SK-N-SH (cell line): ENCODE measurements at regions of chr5 and their contacts with region 1.

Region 1: GRCh38 chr5:159106569-159107282 is 7.0 kb upstream of the EBF1 start:
- DNase-seq: peak; percentile 91
- H3K4me3 ChIP-seq: peak overlapping the region; percentile 28 to 63; a peak in 2 of 4 replicates
- H3K27ac ChIP-seq: no peak overlapping the region
- H3K4me1 ChIP-seq: no peaks in the 10 kb centered on the region; a peak in 1 of 4 replicates
- H3K27me3 ChIP-seq: peaks cover 10% of the 10 kb centered on the region; the same call in 1 of the 2 replicates
- CTCF ChIP-seq: peak; percentile 97
- EP300 ChIP-seq: no peak
- RAD21 ChIP-seq: peak; percentile 96

Region 2: DNA sequence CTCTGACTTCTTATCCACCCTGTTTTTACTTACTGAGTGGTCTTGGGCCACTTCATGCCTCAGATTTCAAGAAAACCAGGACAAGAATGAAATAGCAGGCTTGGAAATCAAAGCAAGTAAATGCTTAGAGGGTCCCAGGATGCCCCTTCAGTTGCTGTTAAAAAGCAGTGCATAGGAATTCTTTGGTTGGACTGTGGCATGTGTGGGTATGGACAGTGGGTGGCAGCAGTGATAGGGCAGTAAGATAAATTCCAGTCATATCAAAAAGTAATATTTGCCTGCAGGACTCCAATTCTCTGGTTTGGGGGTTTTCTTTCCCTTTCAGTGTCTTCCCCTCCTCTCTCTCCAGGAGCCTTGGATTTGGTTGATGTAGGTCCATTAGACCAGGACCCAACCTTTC is 941.1 kb before region 1 on chr5:
- CTCF ChIA-PET with region 1: interaction called, 18 read pairs
- POLR2A ChIA-PET with region 1: no interaction called
- DNase-seq: no peak
- H3K4me3 ChIP-seq: no peak overlapping the region
- H3K27ac ChIP-seq: no peak overlapping the region
- H3K4me1 ChIP-seq: peaks cover 0 to 17% of the 10 kb centered on the region in 2 experiments; a peak in 2 of 4 replicates
- H3K27me3 ChIP-seq: no peaks in the 10 kb centered on the region
- CTCF ChIP-seq: 0 out of 2 replicates have a peak, but pooled peaks have one; percentile 10
- EP300 ChIP-seq: no peak
- RAD21 ChIP-seq: peak; percentile 20; the same call in 1 of the 2 replicates

Region 3: DNA sequence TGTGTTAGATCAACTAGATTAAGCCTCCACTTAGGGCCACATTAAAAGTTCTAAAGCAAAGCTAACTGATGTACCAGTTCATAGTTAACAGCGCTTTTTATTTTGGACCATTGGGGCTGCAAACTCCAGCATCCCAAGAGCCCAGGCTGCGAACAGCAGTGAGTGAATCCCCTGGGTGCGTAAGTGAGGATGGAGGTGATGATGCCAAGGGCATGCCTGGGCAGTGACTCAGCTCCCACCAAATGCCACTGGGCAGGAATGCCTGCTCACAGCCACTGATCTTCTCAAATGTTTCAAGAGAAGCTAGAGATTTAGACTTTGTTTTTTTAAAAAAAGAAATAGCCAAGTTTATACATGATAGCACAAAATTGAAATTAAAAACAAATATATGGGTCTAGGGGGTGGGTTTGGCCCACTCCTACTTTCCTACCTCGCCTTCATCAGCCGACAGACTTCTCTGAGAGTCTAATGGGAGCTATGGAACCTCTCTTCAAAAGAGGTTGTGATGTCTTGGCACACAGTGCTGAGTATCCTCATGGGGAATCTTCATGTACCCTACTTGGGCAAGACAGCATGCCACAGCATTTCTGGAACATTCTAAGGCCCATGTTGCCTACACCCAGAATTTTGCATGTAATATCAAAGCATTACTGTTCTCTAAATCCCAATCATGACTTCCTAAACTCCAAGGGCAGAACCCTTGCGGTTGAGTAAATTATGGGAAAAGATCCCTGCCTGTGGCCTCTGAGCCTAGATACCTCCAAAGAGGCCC is 405.1 kb before region 1 on chr5:
- CTCF ChIA-PET with region 1: interaction called, 178 read pairs
- POLR2A ChIA-PET with region 1: no interaction called
- DNase-seq: no peak
- H3K4me3 ChIP-seq: peak overlapping the region in 1 of 2 experiments; percentile 25; a peak in 1 of 4 replicates
- H3K27ac ChIP-seq: peak overlapping the region; percentile 22 to 74; a peak in 3 of 4 replicates
- H3K4me1 ChIP-seq: peaks cover 3 to 13% of the 10 kb centered on the region in 2 experiments
- H3K27me3 ChIP-seq: no peaks in the 10 kb centered on the region
- CTCF ChIP-seq: no peak
- EP300 ChIP-seq: peak in 1 of 2 experiments; percentile 47; a peak in 1 of 4 replicates
- RAD21 ChIP-seq: no peak

Region 4: DNA sequence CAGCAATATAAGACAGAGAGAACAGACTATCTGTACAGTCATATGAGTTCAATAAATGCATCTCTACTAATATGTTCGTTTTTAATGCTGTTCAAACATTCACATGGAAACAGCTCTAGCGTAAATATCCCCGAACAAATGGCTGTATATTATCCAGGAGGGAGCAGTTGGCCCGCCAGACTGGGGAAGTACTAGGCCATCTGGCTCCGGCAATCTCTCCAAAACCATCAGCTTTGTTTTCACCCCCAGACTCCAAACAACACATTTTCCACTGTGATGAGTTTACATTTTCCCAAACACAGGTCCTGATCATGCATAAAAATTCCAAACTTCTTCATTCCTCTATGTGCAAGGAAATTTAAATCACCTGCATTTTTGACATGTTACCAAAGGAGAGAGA is 15.7 kb before region 1 on chr5:
- CTCF ChIA-PET with region 1: interaction called, 13 read pairs
- POLR2A ChIA-PET with region 1: no interaction called
- DNase-seq: no peak
- H3K4me3 ChIP-seq: no peak overlapping the region
- H3K27ac ChIP-seq: no peak overlapping the region
- H3K4me1 ChIP-seq: peaks cover 0 to 4% of the 10 kb centered on the region in 2 experiments; a peak in 2 of 4 replicates
- H3K27me3 ChIP-seq: no peaks in the 10 kb centered on the region
- CTCF ChIP-seq: no peak
- EP300 ChIP-seq: no peak
- RAD21 ChIP-seq: no peak

Region 5: GRCh38 chr5:159133041-159133741 is 26.5 kb after region 1 on chr5:
- CTCF ChIA-PET with region 1: interaction called, 16 read pairs
- POLR2A ChIA-PET with region 1: no interaction called
- DNase-seq: peak; percentile 32
- H3K4me3 ChIP-seq: no peak overlapping the region; a peak in 1 of 4 replicates
- H3K27ac ChIP-seq: no peak overlapping the region
- H3K4me1 ChIP-seq: no peaks in the 10 kb centered on the region; a peak in 2 of 4 replicates
- H3K27me3 ChIP-seq: no peaks in the 10 kb centered on the region; the same call in 1 of the 2 replicates
- CTCF ChIP-seq: peak; percentile 84
- EP300 ChIP-seq: no peak
- RAD21 ChIP-seq: peak; percentile 89

Region 6: DNA sequence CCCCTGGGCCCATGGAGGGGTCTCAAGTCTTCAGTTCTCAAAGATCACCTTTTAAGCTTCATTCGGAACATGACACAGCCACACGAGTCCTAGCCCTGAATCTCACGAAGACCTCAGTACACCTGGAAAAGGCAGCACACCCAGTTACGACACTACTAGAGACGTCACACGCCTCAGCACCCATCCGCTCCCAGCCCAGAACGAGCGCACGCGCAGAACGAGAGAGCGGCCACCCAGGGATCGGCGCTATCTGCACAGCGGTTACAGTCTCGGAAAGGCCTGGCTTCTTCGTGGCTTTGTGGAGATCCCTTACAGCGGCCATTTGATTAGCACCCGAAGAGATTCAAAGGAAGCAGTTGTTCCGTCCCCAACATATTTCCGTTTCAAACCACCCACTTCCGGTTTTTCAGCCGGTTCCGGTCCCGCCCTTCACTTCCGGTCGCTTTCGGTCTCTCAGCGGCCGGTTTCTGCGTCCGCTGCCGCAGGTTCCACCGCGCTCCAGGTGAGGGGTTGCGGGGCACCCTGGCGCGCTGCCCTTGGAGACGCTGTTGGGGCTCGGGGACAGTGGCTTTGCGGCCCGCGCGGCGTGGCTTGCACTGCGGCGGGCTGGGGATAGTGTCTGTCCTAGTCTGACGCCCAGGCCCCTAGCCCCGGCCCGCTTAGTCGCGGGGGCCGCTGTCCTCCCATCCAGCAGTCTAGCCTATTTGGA is 156.3 kb after region 1 on chr5 and contains the start of gene UBLCP1:
- CTCF ChIA-PET with region 1: no interaction called
- POLR2A ChIA-PET with region 1: no interaction called
- DNase-seq: peak; percentile 90
- H3K4me3 ChIP-seq: peak within 1 kb of the TSS; percentile 97 to 100
- H3K27ac ChIP-seq: peak within 1 kb of the TSS; percentile 94 to 98
- H3K4me1 ChIP-seq: peaks cover 0 to 10% of the 10 kb centered on the region in 2 experiments; a peak in 2 of 4 replicates
- H3K27me3 ChIP-seq: no peaks in the 10 kb centered on the region
- CTCF ChIP-seq: no peak
- EP300 ChIP-seq: no peak
- RAD21 ChIP-seq: no peak; the same call in 1 of the 2 replicates
- polyA plus RNA-seq, gene UBLCP1: 13.8 and 19.5 TPM in 2 replicates